Naive thymus-derived CD4-positive, alpha-beta T cell (primary cell): ENCODE measurements at regions of chr7 and their contacts with region 1.

Region 1: DNA sequence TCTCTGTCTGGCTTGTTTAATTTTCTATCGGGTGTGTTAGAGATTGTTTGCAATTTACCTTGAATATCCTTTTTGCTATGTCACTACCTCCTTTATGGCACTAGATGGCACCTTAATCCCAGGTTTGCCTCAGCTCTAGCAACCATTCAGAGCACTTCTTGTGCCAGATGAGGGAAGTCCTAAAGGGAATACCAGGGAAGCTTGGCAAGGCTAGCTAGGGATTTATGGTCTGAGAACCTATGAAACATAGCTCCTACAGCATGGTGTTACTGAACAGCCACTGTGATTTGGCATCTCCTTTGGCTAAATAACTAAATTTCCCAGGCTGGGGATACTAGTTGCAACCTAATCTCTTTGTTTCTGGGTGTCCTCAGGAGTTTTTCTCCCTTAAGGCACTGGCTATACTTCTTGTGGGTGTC is 69.0 kb upstream of the VOPP1 start:
- DNase-seq: peak in 8 of 9 donors; percentile 23 to 66 (median 52)
- ATAC-seq: peak; percentile 81
- H3K4me3 ChIP-seq: no peak overlapping the region
- H3K4me3 Mint-ChIP-seq: peak overlapping the region in 1 of 10 donors; percentile 59
- H3K27ac ChIP-seq: no peak overlapping the region
- H3K27ac Mint-ChIP-seq: peak overlapping the region in 1 of 9 donors; percentile 72
- H3K4me1 ChIP-seq: peaks cover 6 to 7% of the 10 kb centered on the region in 2 donors
- H3K4me1 Mint-ChIP-seq: peaks cover 7 to 15% (median 12%) of the 10 kb centered on the region in 7 donors
- H3K27me3 ChIP-seq: peaks cover 0 to 3% of the 10 kb centered on the region in 2 donors
- H3K27me3 Mint-ChIP-seq: peaks cover 0 to 9% (median 5%) of the 10 kb centered on the region in 5 donors

Region 2: DNA sequence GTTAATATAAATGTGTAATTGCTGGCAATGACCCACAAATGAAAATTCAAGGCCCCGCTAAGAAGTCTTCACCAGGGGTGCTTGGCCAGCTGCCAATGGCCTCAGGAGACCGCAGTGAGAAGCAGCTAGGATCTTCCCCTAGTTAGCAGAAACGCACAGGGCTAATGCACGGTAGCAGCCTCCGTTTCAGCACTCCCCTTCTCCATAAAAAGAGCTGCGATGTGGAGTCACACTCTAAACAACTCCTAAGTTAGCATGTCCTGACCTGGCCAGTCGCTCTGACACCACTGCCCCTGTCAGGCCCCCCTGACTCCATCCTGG is 82.3 kb after region 1 on chr7:
- CTCF ChIA-PET with region 1: no interaction called
- POLR2A ChIA-PET with region 1: no interaction called
- intact Hi-C with region 1: loop called (anchors 1 kb)
- DNase-seq: no peak
- ATAC-seq: no peak
- H3K4me3 ChIP-seq: no peak overlapping the region
- H3K4me3 Mint-ChIP-seq: no peak overlapping the region
- H3K27ac ChIP-seq: no peak overlapping the region
- H3K27ac Mint-ChIP-seq: no peak overlapping the region
- H3K4me1 ChIP-seq: no peaks in the 10 kb centered on the region
- H3K4me1 Mint-ChIP-seq: peaks cover 0 to 3% (median 0%) of the 10 kb centered on the region in 7 donors
- H3K27me3 ChIP-seq: no peaks in the 10 kb centered on the region
- H3K27me3 Mint-ChIP-seq: peaks cover 0 to 9% (median 0%) of the 10 kb centered on the region in 5 donors

Region 3: DNA sequence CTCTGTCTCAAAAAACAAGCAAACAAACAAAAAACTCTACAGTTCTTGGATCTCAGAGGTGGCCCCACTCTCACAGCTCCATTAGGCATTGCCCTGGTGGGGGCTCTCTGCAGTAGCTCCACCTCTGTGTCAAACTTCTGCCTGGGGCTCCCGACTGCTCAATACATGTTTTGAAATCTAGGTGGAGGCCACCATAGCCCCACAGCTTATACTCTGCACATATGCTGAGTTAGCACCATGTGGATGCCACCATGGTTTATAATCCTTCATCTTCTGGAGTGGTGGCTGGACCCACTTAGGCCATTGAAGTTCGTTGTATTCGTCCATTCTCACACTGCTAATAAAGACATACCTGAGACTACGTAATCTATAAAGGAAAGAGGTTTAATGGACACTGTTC is 142.9 kb after region 1 on chr7:
- CTCF ChIA-PET with region 1: no interaction called
- POLR2A ChIA-PET with region 1: no interaction called
- intact Hi-C with region 1: no loop called
- DNase-seq: no peak
- ATAC-seq: no peak
- H3K4me3 ChIP-seq: no peak overlapping the region
- H3K4me3 Mint-ChIP-seq: no peak overlapping the region
- H3K27ac ChIP-seq: no peak overlapping the region
- H3K27ac Mint-ChIP-seq: no peak overlapping the region
- H3K4me1 ChIP-seq: no peaks in the 10 kb centered on the region
- H3K4me1 Mint-ChIP-seq: no peaks in the 10 kb centered on the region
- H3K27me3 ChIP-seq: no peaks in the 10 kb centered on the region
- H3K27me3 Mint-ChIP-seq: no peaks in the 10 kb centered on the region

Region 4: GRCh38 chr7:55887821-55888247 is 246.6 kb after region 1 on chr7:
- CTCF ChIA-PET with region 1: no interaction called
- POLR2A ChIA-PET with region 1: no interaction called
- intact Hi-C with region 1: loop called (anchors 1 to 10 kb)
- DNase-seq: peak in 2 of 9 donors; percentile 2 to 6
- ATAC-seq: no peak
- H3K4me3 ChIP-seq: peak overlapping the region; percentile 46
- H3K4me3 Mint-ChIP-seq: peak overlapping the region; percentile 82 to 89 (median 86)
- H3K27ac ChIP-seq: peak overlapping the region; percentile 61
- H3K27ac Mint-ChIP-seq: peak overlapping the region; percentile 83 to 94 (median 90)
- H3K4me1 ChIP-seq: no peaks in the 10 kb centered on the region
- H3K4me1 Mint-ChIP-seq: peaks cover 0 to 10% (median 5%) of the 10 kb centered on the region in 7 donors
- H3K27me3 ChIP-seq: no peaks in the 10 kb centered on the region
- H3K27me3 Mint-ChIP-seq: no peaks in the 10 kb centered on the region

Region 5: GRCh38 chr7:55964261-55965099 is 323.2 kb after region 1 on chr7 and contains the start of gene NIPSNAP2:
- CTCF ChIA-PET with region 1: interaction called, 5 read pairs
- POLR2A ChIA-PET with region 1: no interaction called
- intact Hi-C with region 1: loop called (anchors 1 kb)
- DNase-seq: peak; percentile 37 to 86 (median 68)
- ATAC-seq: peak; percentile 94
- H3K4me3 ChIP-seq: peak within 1 kb of the TSS; percentile 50
- H3K4me3 Mint-ChIP-seq: peak within 1 kb of the TSS; percentile 79 to 91 (median 88)
- H3K27ac ChIP-seq: peak within 1 kb of the TSS; percentile 89
- H3K27ac Mint-ChIP-seq: peak within 1 kb of the TSS; percentile 89 to 94 (median 91)
- H3K4me1 ChIP-seq: peaks cover 10% of the 10 kb centered on the region in 2 donors
- H3K4me1 Mint-ChIP-seq: peaks cover 24 to 55% (median 42%) of the 10 kb centered on the region in 7 donors
- H3K27me3 ChIP-seq: no peaks in the 10 kb centered on the region
- H3K27me3 Mint-ChIP-seq: no peaks in the 10 kb centered on the region
- total RNA-seq, gene NIPSNAP2: 30.1 to 37.8 (median 34.4) TPM

Region 6: GRCh38 chr7:56003749-56004148 is 362.5 kb after region 1 on chr7:
- CTCF ChIA-PET with region 1: no interaction called
- POLR2A ChIA-PET with region 1: no interaction called
- intact Hi-C with region 1: loop called (anchors 2 to 5 kb)
- DNase-seq: no peak
- ATAC-seq: no peak
- H3K4me3 ChIP-seq: no peak overlapping the region
- H3K4me3 Mint-ChIP-seq: no peak overlapping the region
- H3K27ac ChIP-seq: no peak overlapping the region
- H3K27ac Mint-ChIP-seq: no peak overlapping the region
- H3K4me1 ChIP-seq: no peaks in the 10 kb centered on the region
- H3K4me1 Mint-ChIP-seq: peaks cover 0 to 17% (median 0%) of the 10 kb centered on the region in 7 donors
- H3K27me3 ChIP-seq: no peaks in the 10 kb centered on the region
- H3K27me3 Mint-ChIP-seq: no peaks in the 10 kb centered on the region

Region 7: GRCh38 chr7:56009695-56010094 is 368.4 kb after region 1 on chr7:
- CTCF ChIA-PET with region 1: no interaction called
- POLR2A ChIA-PET with region 1: no interaction called
- intact Hi-C with region 1: loop called (anchors 2 to 5 kb)
- DNase-seq: no peak
- ATAC-seq: no peak
- H3K4me3 ChIP-seq: no peak overlapping the region
- H3K4me3 Mint-ChIP-seq: no peak overlapping the region
- H3K27ac ChIP-seq: no peak overlapping the region
- H3K27ac Mint-ChIP-seq: no peak overlapping the region
- H3K4me1 ChIP-seq: no peaks in the 10 kb centered on the region
- H3K4me1 Mint-ChIP-seq: peaks cover 0 to 3% (median 0%) of the 10 kb centered on the region in 7 donors
- H3K27me3 ChIP-seq: no peaks in the 10 kb centered on the region
- H3K27me3 Mint-ChIP-seq: no peaks in the 10 kb centered on the region